ENCODE measurements at regions of chr6 and their contacts with region 1.

Region 1: DNA sequence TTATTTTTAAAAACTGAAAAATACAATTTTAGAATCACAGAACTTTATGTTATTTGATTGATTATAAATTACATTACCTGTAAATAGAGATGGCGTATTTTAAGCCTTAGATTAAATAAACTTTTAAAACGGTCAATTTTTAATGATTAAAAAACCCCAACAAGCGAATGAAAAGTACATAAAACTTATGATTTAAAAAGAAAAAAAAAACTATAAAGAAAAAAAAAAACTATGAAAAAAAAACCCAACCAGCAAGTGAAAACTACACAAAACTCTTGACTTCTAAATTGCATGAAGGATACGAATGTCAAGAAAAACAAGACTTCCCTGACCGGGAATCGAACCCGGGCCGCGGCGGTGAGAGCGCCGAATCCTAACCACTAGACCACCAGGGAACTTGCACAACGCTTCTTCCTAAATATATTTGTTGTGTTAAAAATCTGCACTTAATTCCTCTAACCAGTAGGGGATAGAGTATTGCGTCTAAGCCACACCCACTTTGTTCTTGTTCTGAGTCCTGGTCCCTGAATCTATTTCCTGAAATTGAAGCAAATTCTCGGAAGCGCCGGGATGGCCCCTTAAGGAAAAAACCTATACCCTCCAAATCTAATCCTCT is 10.7 kb upstream of the NCOA7 start:
- DNase-seq: peak; percentile 86
- H3K4me3 ChIP-seq: peak overlapping the region; percentile 77
- H3K27ac ChIP-seq: peak overlapping the region; percentile 77 to 97
- H3K4me1 ChIP-seq: peaks cover 0 to 6% of the 10 kb centered on the region in 2 experiments; a peak in 2 of 4 replicates
- H3K27me3 ChIP-seq: no peaks in the 10 kb centered on the region; the same call in 1 of the 2 replicates
- CTCF ChIP-seq: peak; percentile 22; the same call in 1 of the 2 replicates
- EP300 ChIP-seq: no peak
- RAD21 ChIP-seq: no peak

Region 2: GRCh38 chr6:125693480-125693879 is 86.6 kb before region 1 on chr6:
- CTCF ChIA-PET with region 1: no interaction called
- POLR2A ChIA-PET with region 1: no interaction called
- DNase-seq: no peak
- H3K4me3 ChIP-seq: no peak overlapping the region
- H3K27ac ChIP-seq: no peak overlapping the region
- H3K4me1 ChIP-seq: no peaks in the 10 kb centered on the region
- H3K27me3 ChIP-seq: no peaks in the 10 kb centered on the region
- CTCF ChIP-seq: no peak
- EP300 ChIP-seq: no peak
- RAD21 ChIP-seq: no peak

Region 3: GRCh38 chr6:125759184-125759902 is 20.7 kb before region 1 on chr6:
- CTCF ChIA-PET with region 1: interaction called, 12 read pairs
- POLR2A ChIA-PET with region 1: no interaction called
- DNase-seq: peak; percentile 87
- H3K4me3 ChIP-seq: peak overlapping the region; percentile 27 to 37
- H3K27ac ChIP-seq: no peak overlapping the region
- H3K4me1 ChIP-seq: peaks cover 0 to 8% of the 10 kb centered on the region in 2 experiments; a peak in 1 of 4 replicates
- H3K27me3 ChIP-seq: peaks cover 68% of the 10 kb centered on the region
- CTCF ChIP-seq: peak; percentile 73
- EP300 ChIP-seq: no peak
- RAD21 ChIP-seq: peak; percentile 51

Region 4: GRCh38 chr6:125956506-125957390 is 176.7 kb after region 1 on chr6 and contains the start of gene HINT3:
- CTCF ChIA-PET with region 1: interaction called, 58 read pairs
- POLR2A ChIA-PET with region 1: interaction called, 17 read pairs
- DNase-seq: peak; percentile 92
- H3K4me3 ChIP-seq: peak within 1 kb of the TSS; percentile 79 to 96
- H3K27ac ChIP-seq: peak within 1 kb of the TSS; percentile 68 to 90
- H3K4me1 ChIP-seq: peaks cover 7 to 8% of the 10 kb centered on the region in 2 experiments; a peak in 3 of 4 replicates
- H3K27me3 ChIP-seq: no peaks in the 10 kb centered on the region
- CTCF ChIP-seq: peak; percentile 97
- EP300 ChIP-seq: peak in 1 of 2 experiments; percentile 12; a peak in 1 of 4 replicates
- RAD21 ChIP-seq: peak; percentile 75
- polyA plus RNA-seq, gene HINT3: 1.8 and 1.9 TPM in 2 replicates

Region 5: DNA sequence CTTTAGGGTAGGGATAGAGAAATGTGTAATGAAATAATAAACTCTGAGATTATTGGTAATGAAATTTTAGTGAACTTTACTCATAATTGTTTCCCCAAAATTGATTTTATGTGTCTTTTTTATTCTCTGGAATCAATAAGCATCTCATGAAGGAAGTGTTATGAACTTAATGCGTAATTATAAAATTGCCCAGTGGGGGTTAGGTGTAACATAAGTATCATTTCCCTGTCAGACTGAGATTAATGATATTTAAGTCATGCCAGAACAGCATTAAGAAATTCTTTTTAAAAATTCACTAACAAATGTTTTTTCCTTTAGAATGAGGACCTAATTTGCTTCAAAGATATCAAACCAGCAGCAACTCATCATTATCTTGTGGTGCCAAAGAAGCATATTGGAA is 186.5 kb after region 1 on chr6:
- CTCF ChIA-PET with region 1: interaction called, 13 read pairs
- POLR2A ChIA-PET with region 1: interaction called, 3 read pairs
- DNase-seq: no peak
- H3K4me3 ChIP-seq: no peak overlapping the region
- H3K27ac ChIP-seq: no peak overlapping the region
- H3K4me1 ChIP-seq: peaks cover 0 to 3% of the 10 kb centered on the region in 2 experiments; a peak in 2 of 4 replicates
- H3K27me3 ChIP-seq: no peaks in the 10 kb centered on the region
- CTCF ChIP-seq: no peak
- EP300 ChIP-seq: no peak
- RAD21 ChIP-seq: no peak

Region 6: GRCh38 chr6:125974214-125974866 is 194.3 kb after region 1 on chr6:
- CTCF ChIA-PET with region 1: interaction called, 32 read pairs
- POLR2A ChIA-PET with region 1: no interaction called
- DNase-seq: peak; percentile 34
- H3K4me3 ChIP-seq: no peak overlapping the region
- H3K27ac ChIP-seq: no peak overlapping the region
- H3K4me1 ChIP-seq: no peaks in the 10 kb centered on the region
- H3K27me3 ChIP-seq: no peaks in the 10 kb centered on the region
- CTCF ChIP-seq: peak; percentile 74
- EP300 ChIP-seq: no peak
- RAD21 ChIP-seq: peak; percentile 80

Region 7: DNA sequence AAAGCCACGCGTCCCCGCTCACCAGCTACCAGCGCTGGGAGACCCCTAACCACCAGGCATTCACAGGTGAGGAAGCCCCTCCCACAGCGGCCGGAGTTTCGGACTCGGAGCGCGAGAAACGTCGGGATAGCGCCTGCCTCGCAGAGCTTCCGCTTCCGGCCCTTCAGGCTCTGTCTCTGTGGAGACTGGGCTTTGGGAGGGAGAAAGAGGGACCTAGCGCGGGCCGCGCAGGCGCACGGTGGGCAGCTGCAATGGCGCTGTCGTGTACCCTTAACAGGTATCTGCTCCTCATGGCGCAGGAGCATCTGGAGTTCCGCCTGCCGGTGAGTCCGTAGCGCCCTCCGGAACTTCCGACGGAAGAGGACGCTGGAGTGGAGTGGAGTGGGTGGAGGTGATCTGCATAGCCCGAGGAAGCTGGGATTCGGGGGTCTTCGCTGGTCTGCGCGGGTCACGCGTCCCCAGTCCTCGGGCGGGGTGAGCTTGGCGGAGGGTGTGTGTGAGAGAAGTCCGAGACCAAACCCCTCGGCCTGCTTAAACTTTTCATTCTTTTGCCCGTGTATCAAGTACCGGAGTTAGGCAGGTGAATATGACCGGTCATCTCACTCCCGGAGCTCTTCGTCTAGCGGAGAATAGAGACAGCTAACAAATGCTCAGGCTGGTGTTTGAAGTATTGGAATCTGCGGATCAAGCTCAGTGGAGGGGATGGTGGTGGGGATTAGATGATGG is 206.4 kb after region 1 on chr6 and contains the start of gene TRMT11:
- CTCF ChIA-PET with region 1: interaction called, 14 read pairs
- POLR2A ChIA-PET with region 1: interaction called, 17 read pairs
- DNase-seq: peak; percentile 91
- H3K4me3 ChIP-seq: peak within 1 kb of the TSS; percentile 88 to 98
- H3K27ac ChIP-seq: peak within 1 kb of the TSS; percentile 53 to 87; a peak in 3 of 4 replicates
- H3K4me1 ChIP-seq: peaks cover 3 to 21% of the 10 kb centered on the region in 2 experiments
- H3K27me3 ChIP-seq: no peaks in the 10 kb centered on the region
- CTCF ChIP-seq: no peak
- EP300 ChIP-seq: 0 out of 4 replicates have a peak, but pooled peaks of 1 of the 2 experiments have one; percentile 2
- RAD21 ChIP-seq: no peak
- polyA plus RNA-seq, gene TRMT11: 15.0 and 22.8 TPM in 2 replicates